PC-3 (cell line): ENCODE measurements at regions of chr18 and their contacts with region 1.

Region 1: GRCh38 chr18:55415258-55415871 is 172.6 kb downstream of the TCF4 start:
- DNase-seq: peak; percentile 74
- ATAC-seq: peak; percentile 91
- H3K4me3 ChIP-seq: no peak overlapping the region
- H3K27ac ChIP-seq: no peak overlapping the region
- H3K4me1 ChIP-seq: peaks cover 10% of the 10 kb centered on the region; the same call in 1 of the 2 replicates
- H3K27me3 ChIP-seq: no peaks in the 10 kb centered on the region
- CTCF ChIP-seq: peak; percentile 96

Region 2: DNA sequence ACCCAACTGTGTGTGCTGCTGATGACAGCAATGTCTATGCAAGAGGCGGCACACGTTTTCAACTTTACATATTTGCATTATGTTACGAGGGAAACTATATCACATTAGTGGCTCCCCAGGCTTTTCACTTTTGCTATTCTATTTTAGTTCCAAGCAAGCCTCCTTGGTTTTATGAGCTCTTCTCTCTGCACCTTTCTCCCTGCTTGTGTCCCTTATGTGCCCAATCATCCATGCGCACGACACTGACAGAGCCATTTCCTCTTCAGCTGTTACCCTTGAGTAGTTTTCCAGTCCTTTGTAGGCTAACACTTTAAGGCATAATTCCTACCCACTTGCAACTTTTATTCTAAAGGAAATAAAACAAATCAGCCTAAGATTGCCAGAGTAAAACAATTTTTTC is 18.3 kb after region 1 on chr18:
- CTCF ChIA-PET with region 1: interaction called, 13 read pairs
- POLR2A ChIA-PET with region 1: no interaction called
- intact Hi-C with region 1: no loop called
- DNase-seq: no peak
- ATAC-seq: no peak
- H3K4me3 ChIP-seq: no peak overlapping the region
- H3K27ac ChIP-seq: no peak overlapping the region
- H3K4me1 ChIP-seq: no peaks in the 10 kb centered on the region
- H3K27me3 ChIP-seq: no peaks in the 10 kb centered on the region
- CTCF ChIP-seq: no peak

Region 3: GRCh38 chr18:55861266-55861665 is 445.9 kb after region 1 on chr18:
- CTCF ChIA-PET with region 1: no interaction called
- POLR2A ChIA-PET with region 1: no interaction called
- intact Hi-C with region 1: loop called (anchors 1 kb)
- DNase-seq: peak; percentile 69
- ATAC-seq: peak; percentile 81
- H3K4me3 ChIP-seq: no peak overlapping the region
- H3K27ac ChIP-seq: no peak overlapping the region
- H3K4me1 ChIP-seq: peaks cover 20% of the 10 kb centered on the region
- H3K27me3 ChIP-seq: no peaks in the 10 kb centered on the region
- CTCF ChIP-seq: peak; percentile 77